ENCODE measurements at regions of chr6 and their contacts with region 1.

Region 1: GRCh38 chr6:43761666-43762409 is 8.2 kb upstream of the VEGFA start:
- DNase-seq: no peak
- H3K4me3 ChIP-seq: no peak overlapping the region
- H3K27ac ChIP-seq: no peak overlapping the region
- H3K4me1 ChIP-seq: no peaks in the 10 kb centered on the region
- H3K27me3 ChIP-seq: no peaks in the 10 kb centered on the region
- CTCF ChIP-seq: no peak

Region 2: DNA sequence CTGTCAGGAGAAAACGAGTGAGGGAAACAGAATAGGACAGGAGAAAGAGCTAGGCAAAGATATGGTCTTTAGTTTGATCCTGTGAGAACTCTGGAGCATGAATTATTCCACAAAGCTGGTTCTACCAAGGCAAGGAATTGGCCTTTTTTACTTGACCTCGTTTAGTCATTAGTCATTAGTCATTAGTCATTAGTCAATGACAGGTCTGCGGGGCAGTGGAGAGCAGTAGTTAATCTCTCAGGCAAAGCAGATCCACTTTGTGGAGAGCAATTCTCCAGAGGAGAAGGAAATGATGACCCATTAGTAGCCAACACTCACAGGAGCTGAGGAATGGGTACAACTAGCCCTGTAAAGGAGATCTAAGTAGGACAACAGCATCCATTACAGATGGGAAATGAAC is 356.5 kb before region 1 on chr6:
- CTCF ChIA-PET with region 1: no interaction called
- POLR2A ChIA-PET with region 1: no interaction called
- intact Hi-C with region 1: no loop called
- DNase-seq: peak in 1 of 2 experiments; percentile 68
- H3K4me3 ChIP-seq: no peak overlapping the region
- H3K27ac ChIP-seq: no peak overlapping the region
- H3K4me1 ChIP-seq: peaks cover 14% of the 10 kb centered on the region
- H3K27me3 ChIP-seq: no peaks in the 10 kb centered on the region
- CTCF ChIP-seq: no peak

Region 3: DNA sequence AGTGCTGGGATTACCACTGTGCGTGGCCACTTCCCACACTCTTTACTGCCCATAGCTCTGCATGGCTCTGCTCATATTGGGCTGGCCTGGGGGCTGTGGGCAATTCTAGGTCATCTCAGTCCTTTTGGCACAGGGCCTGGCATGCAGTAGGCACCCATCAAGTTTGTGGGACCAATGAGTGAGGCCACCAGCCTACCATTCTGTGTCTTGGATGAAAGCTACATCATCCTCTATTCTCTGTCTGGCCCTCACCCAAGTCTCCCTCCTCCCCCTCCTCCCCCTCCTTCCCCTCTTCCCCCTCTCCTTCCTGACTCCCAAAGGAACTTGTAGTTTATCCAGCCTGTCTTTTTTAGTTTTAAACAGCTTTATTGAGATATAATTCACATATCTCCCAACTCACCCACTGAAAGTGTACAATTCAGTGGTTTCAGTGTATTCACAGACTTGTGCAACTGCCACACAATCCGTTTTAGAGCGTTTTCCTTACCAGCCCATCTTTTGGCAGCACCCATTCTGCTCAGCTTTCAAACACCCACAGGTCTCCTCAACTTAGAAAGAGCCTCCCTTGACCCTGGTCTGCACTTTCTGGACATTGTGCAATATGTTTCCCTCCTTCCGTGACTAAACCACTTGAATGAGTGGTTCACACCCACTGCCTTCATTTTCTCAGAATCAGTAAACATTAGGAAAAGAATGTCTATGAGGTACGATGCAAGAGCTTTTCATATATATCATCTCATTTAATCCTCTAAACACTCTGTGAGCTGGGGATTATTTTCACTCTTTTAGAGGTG is 52.8 kb before region 1 on chr6:
- CTCF ChIA-PET with region 1: no interaction called
- POLR2A ChIA-PET with region 1: no interaction called
- intact Hi-C with region 1: no loop called
- DNase-seq: peak in 1 of 2 experiments; percentile 82
- H3K4me3 ChIP-seq: no peak overlapping the region
- H3K27ac ChIP-seq: peak overlapping the region; percentile 31
- H3K4me1 ChIP-seq: peaks cover 40% of the 10 kb centered on the region
- H3K27me3 ChIP-seq: no peaks in the 10 kb centered on the region
- CTCF ChIP-seq: no peak

Region 4: GRCh38 chr6:43747784-43748183 is 14.1 kb before region 1 on chr6:
- CTCF ChIA-PET with region 1: interaction called, 10 read pairs
- POLR2A ChIA-PET with region 1: interaction called, 4 read pairs
- intact Hi-C with region 1: no loop called
- DNase-seq: no peak
- H3K4me3 ChIP-seq: no peak overlapping the region
- H3K27ac ChIP-seq: no peak overlapping the region
- H3K4me1 ChIP-seq: peaks cover 7% of the 10 kb centered on the region
- H3K27me3 ChIP-seq: no peaks in the 10 kb centered on the region
- CTCF ChIP-seq: no peak

Region 5: DNA sequence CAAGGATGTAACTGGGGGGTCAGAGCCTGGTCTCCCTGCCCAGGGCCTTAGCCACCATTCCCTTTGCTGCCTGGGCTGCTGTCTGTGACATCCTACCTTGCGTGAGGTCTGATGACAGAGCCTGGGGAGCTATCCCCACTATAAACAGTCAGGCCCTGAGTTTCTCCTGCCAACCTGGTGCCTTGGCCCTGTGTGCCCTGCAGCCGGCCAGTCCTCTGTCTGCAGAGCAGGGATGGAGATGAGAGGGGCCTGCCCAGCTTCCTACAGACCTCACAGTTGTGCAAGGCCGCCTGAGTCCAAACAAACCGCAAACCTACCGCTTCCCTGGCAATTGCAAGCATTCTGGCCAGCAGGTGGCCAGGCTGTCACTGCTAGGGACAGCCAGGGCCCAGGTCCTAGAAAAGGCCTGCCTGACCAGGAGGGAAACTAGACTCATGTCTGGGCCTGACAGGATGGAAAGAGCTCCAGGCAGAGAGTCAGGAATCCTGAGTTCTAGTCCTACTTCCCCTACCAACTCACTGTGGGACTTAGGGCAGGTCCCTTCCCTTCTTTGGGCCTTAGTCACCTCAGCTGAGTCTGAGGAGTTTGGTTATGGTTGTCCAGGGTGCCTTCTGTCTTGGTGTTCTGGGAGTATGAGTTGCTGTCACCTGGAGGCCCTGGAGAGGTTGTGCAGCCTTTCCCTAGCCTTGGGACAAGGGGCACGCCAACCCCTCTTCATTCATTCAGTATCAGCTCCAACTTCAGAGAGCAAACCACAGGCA is 94.3 kb after region 1 on chr6:
- CTCF ChIA-PET with region 1: no interaction called
- POLR2A ChIA-PET with region 1: no interaction called
- intact Hi-C with region 1: no loop called
- DNase-seq: peak; percentile 49 to 66
- H3K4me3 ChIP-seq: no peak overlapping the region
- H3K27ac ChIP-seq: 0 out of 2 replicates have a peak overlapping the region, but pooled peaks have one; percentile 2
- H3K4me1 ChIP-seq: peaks cover 37% of the 10 kb centered on the region
- H3K27me3 ChIP-seq: no peaks in the 10 kb centered on the region
- CTCF ChIP-seq: peak; percentile 66

Region 6: GRCh38 chr6:44105146-44105545 is 343.3 kb after region 1 on chr6:
- CTCF ChIA-PET with region 1: no interaction called
- POLR2A ChIA-PET with region 1: interaction called, 11 read pairs
- intact Hi-C with region 1: no loop called
- DNase-seq: no peak
- H3K4me3 ChIP-seq: no peak overlapping the region
- H3K27ac ChIP-seq: no peak overlapping the region
- H3K4me1 ChIP-seq: no peaks in the 10 kb centered on the region
- H3K27me3 ChIP-seq: no peaks in the 10 kb centered on the region
- CTCF ChIP-seq: no peak

Measured in PC-9 (cell line).